ENCODE measurements at regions of chr7 and their contacts with region 1.

Region 1: GRCh38 chr7:29105752-29106668 is 40.3 kb downstream of the CPVL start:
- DNase-seq: no peak
- ATAC-seq: peak; percentile 83

Region 2: DNA sequence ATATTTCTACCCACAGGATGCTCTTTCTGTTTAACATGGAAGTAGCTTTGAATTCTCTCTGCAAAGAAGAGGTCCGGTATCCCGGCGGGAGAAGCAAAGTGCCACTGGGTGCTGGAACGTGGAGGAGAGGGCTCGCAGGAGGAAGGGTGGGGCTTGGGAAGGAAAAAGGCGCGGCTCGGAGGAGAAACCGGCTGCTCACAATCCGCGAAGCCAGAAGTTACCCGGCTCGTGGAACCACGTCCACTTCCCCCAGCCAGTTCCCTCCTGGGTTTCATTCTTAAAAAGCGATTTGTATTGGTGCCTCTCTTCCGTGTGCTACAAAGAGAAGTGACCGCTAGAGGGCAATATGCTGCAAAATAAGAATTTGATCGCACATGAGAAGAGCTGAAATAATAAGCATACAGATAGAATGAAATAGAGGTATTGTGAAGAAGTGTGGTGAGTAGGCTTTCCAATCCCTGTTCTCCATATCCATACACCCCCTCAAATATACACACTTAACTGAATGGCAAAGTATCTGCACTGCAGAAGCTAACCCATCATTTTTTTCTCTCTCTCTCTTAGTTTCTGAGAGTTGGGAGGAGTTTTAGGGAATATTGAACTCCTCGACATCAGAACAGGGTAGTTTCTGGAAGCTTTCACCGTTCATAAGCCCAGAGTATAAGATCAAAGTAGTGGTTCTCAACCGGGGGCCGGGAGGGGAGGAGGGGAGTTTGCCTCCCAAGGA is 179.0 kb before region 1 on chr7:
- intact Hi-C with region 1: loop called (anchors 5 kb)
- DNase-seq: peak; percentile 75
- ATAC-seq: peak; percentile 95

Region 3: DNA sequence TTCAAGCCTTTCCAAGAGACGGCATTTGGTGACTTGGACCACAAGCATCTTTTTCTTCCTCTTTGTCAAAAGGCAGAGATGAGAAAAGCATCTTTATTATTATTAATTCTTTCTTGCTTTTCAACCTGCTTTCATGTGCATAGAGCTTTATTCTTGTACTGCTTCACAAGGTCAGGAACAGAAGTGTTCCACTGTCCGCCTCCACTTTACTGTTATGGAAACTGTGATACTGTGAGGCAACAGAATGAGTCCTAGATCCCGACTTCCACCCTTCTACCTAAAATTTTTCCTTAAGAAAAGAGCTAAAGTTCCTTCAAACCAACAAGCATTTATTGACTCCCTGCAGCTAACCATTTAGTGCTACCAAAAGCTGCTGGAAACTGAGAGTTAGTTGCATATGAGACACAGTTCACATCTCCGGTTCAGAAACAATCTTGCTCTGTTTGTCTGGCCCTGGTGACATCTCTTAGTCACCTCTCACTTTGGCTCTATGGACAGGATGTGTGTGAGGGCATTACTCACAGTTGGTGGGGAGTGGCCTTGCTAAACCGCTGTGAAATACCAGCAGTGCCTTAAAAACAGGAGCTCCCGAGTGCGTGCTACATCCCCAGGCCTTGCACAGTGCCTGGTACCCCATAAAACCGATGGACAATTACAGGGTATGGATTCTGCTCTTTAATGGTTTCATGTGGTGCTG is 70.8 kb before region 1 on chr7:
- intact Hi-C with region 1: no loop called
- DNase-seq: no peak
- ATAC-seq: peak; percentile 79

Measured in sciatic nerve (tissue), 2 donors.